BJ (cell line): ENCODE measurements at regions of chr1 and their contacts with region 1.

Region 1: GRCh38 chr1:10947691-10948462 is 64.6 kb upstream of the TARDBP start:
- DNase-seq: no peak
- H3K4me3 ChIP-seq: no peak overlapping the region
- H3K27me3 ChIP-seq: peaks cover 6% of the 10 kb centered on the region; the same call in 1 of the 2 replicates
- CTCF ChIP-seq: no peak

Region 2: GRCh38 chr1:10936998-10937901 is 10.6 kb before region 1 on chr1:
- CTCF ChIA-PET with region 1: interaction called, 3 read pairs
- POLR2A ChIA-PET with region 1: interaction called, 25 read pairs
- DNase-seq: no peak
- H3K4me3 ChIP-seq: no peak overlapping the region
- H3K27me3 ChIP-seq: peaks cover 5% of the 10 kb centered on the region; the same call in 1 of the 2 replicates
- CTCF ChIP-seq: no peak

Region 3: GRCh38 chr1:10965546-10966226 is 17.8 kb after region 1 on chr1:
- CTCF ChIA-PET with region 1: no interaction called
- POLR2A ChIA-PET with region 1: no interaction called
- DNase-seq: no peak
- H3K4me3 ChIP-seq: no peak overlapping the region
- H3K27me3 ChIP-seq: peaks cover 13% of the 10 kb centered on the region
- CTCF ChIP-seq: no peak